ENCODE measurements at regions of chr2 and their contacts with region 1.

Region 1: GRCh38 chr2:68751397-68752339 is 17.1 kb downstream of the ARHGAP25 start:
- DNase-seq: peak; percentile 93
- H3K4me3 Mint-ChIP-seq: peak overlapping the region; percentile 11
- H3K27ac Mint-ChIP-seq: peak overlapping the region; percentile 77
- H3K4me1 Mint-ChIP-seq: peaks cover 92% of the 10 kb centered on the region
- H3K27me3 Mint-ChIP-seq: no peaks in the 10 kb centered on the region

Region 2: GRCh38 chr2:68698567-68699377 is 52.9 kb before region 1 on chr2:
- CTCF ChIA-PET with region 1: no interaction called
- POLR2A ChIA-PET with region 1: no interaction called
- DNase-seq: no peak
- H3K4me3 Mint-ChIP-seq: no peak overlapping the region
- H3K27ac Mint-ChIP-seq: no peak overlapping the region
- H3K4me1 Mint-ChIP-seq: peaks cover 13% of the 10 kb centered on the region
- H3K27me3 Mint-ChIP-seq: peaks cover 19% of the 10 kb centered on the region

Region 3: GRCh38 chr2:68715353-68716041 is 36.2 kb before region 1 on chr2:
- CTCF ChIA-PET with region 1: interaction called, 51 read pairs
- POLR2A ChIA-PET with region 1: interaction called, 491 read pairs
- DNase-seq: peak; percentile 58
- H3K4me3 Mint-ChIP-seq: no peak overlapping the region
- H3K27ac Mint-ChIP-seq: peak overlapping the region; percentile 89
- H3K4me1 Mint-ChIP-seq: peaks cover 85% of the 10 kb centered on the region
- H3K27me3 Mint-ChIP-seq: peaks cover 1% of the 10 kb centered on the region

Region 4: GRCh38 chr2:68726608-68727367 is 24.9 kb before region 1 on chr2:
- CTCF ChIA-PET with region 1: interaction called, 38 read pairs
- POLR2A ChIA-PET with region 1: interaction called, 491 read pairs
- DNase-seq: peak; percentile 89
- H3K4me3 Mint-ChIP-seq: peak overlapping the region; percentile 54
- H3K27ac Mint-ChIP-seq: peak overlapping the region; percentile 95
- H3K4me1 Mint-ChIP-seq: peaks cover 83% of the 10 kb centered on the region
- H3K27me3 Mint-ChIP-seq: no peaks in the 10 kb centered on the region

Region 5: GRCh38 chr2:68766376-68766845 is 14.7 kb after region 1 on chr2:
- CTCF ChIA-PET with region 1: interaction called, 92 read pairs
- POLR2A ChIA-PET with region 1: interaction called, 356 read pairs
- DNase-seq: peak; percentile 84
- H3K4me3 Mint-ChIP-seq: peak overlapping the region; percentile 70
- H3K27ac Mint-ChIP-seq: peak overlapping the region; percentile 97
- H3K4me1 Mint-ChIP-seq: peaks cover 97% of the 10 kb centered on the region
- H3K27me3 Mint-ChIP-seq: no peaks in the 10 kb centered on the region

Region 6: DNA sequence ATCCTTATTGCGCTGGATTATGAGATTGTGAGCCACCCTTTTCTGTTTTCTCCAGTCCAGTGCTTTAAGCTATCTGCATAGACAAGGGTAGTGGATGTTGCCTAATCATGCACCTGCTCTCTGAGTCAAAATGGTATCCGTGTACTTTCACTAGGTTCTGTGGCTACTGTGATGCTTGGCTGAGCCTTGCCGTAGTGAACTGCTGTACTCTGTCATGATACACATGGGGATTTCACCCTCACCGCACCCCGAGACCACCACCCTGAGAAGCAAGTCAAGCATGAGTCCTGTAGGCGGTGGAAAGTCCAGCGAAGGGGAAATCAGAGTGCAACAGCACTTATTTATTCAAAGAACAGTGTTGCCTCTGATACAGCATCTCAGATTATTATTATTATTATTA is 37.9 kb after region 1 on chr2:
- CTCF ChIA-PET with region 1: interaction called, 15 read pairs
- POLR2A ChIA-PET with region 1: interaction called, 3 read pairs
- DNase-seq: no peak
- H3K4me3 Mint-ChIP-seq: no peak overlapping the region
- H3K27ac Mint-ChIP-seq: peak overlapping the region; percentile 27
- H3K4me1 Mint-ChIP-seq: peaks cover 39% of the 10 kb centered on the region
- H3K27me3 Mint-ChIP-seq: no peaks in the 10 kb centered on the region

Region 7: DNA sequence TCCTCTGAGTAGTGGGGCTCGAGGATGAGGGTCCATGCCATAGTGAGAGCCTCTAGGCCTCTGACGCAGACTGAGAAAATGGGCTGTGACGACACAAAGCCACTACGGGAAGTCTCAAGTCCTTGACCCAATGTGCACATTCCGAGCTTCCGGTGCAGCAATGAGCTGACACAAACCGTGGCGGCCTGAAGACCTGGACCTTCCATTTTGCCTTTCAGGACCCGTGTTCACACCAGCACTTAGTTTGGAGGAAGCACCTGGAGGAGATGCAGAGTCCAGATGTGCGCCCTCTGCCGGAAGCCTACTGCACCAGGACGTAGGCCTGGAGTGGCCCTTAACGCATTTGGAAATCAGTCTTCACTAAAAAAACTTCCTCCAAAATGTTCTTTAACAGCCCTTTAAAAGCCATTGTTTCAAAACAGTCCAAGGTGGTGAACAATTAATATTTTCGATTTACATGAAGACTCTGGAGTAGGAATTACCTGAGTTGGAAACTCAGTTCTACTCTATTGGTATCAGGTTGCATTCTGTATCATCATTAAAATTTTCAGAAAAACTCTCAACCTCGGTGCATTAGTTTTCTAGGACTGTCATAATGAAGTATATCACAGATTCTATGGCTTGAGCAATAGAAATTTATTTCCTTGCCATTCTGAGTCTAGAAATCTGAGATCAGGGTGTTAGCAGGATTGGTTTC is 85.6 kb after region 1 on chr2:
- CTCF ChIA-PET with region 1: interaction called, 28 read pairs
- POLR2A ChIA-PET with region 1: no interaction called
- DNase-seq: peak; percentile 67
- H3K4me3 Mint-ChIP-seq: no peak overlapping the region
- H3K27ac Mint-ChIP-seq: peak overlapping the region; percentile 28
- H3K4me1 Mint-ChIP-seq: peaks cover 43% of the 10 kb centered on the region
- H3K27me3 Mint-ChIP-seq: peaks cover 4% of the 10 kb centered on the region

Region 8: GRCh38 chr2:68925295-68925896 is 173.7 kb after region 1 on chr2:
- CTCF ChIA-PET with region 1: interaction called, 23 read pairs
- POLR2A ChIA-PET with region 1: interaction called, 4 read pairs
- DNase-seq: peak; percentile 64
- H3K4me3 Mint-ChIP-seq: no peak overlapping the region
- H3K27ac Mint-ChIP-seq: no peak overlapping the region
- H3K4me1 Mint-ChIP-seq: peaks cover 9% of the 10 kb centered on the region
- H3K27me3 Mint-ChIP-seq: peaks cover 24% of the 10 kb centered on the region

Region 9: DNA sequence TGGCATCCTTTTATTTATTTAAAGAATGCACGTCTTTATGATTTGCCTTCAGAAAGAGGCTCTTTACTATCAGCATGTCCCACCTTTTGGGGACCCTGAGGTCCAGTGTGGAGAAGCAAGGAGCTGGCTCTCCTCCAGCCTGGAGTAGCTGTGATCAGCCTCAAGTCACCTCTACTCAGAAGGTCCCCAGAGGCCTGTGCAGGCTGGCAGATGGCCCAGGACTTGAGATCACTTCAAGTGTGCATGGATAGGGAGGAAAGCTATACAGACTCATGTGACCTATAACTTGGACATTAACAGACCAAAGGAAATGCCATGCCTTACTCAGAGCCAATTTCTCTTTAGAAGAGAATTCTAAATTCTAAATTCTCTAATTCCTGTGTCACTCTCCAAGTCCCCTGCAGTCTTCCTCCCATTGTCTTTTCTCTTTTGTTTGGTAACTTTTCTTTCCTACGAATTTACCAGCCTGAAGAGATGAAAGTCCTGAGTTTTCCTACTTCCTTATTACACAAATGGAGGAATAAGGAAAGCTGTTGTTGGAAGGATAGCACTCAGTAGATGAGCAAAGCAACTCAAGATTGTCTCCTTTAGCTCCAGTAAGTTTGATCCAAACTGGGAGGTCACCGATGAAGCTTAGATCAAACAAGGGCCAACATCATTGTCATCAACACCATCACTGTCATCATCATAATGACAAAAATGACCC is 471.4 kb after region 1 on chr2:
- CTCF ChIA-PET with region 1: no interaction called
- POLR2A ChIA-PET with region 1: no interaction called
- DNase-seq: no peak
- H3K4me3 Mint-ChIP-seq: no peak overlapping the region
- H3K27ac Mint-ChIP-seq: no peak overlapping the region
- H3K4me1 Mint-ChIP-seq: no peaks in the 10 kb centered on the region
- H3K27me3 Mint-ChIP-seq: peaks cover 32% of the 10 kb centered on the region